ENCODE measurements at regions of chr11 and their contacts with region 1.

Region 1: GRCh38 chr11:86041975-86042378 is 26.9 kb downstream of the PICALM start:
- DNase-seq: peak; percentile 88
- H3K4me3 ChIP-seq: no peak overlapping the region
- H3K27ac ChIP-seq: no peak overlapping the region
- H3K27me3 ChIP-seq: no peaks in the 10 kb centered on the region
- CTCF ChIP-seq: peak; percentile 79

Region 2: GRCh38 chr11:85831017-85831443 is 210.9 kb before region 1 on chr11:
- CTCF ChIA-PET with region 1: no interaction called
- POLR2A ChIA-PET with region 1: no interaction called
- DNase-seq: no peak
- H3K4me3 ChIP-seq: no peak overlapping the region
- H3K27ac ChIP-seq: no peak overlapping the region
- H3K27me3 ChIP-seq: no peaks in the 10 kb centered on the region
- CTCF ChIP-seq: no peak

Region 3: GRCh38 chr11:86021377-86021776 is 20.6 kb before region 1 on chr11:
- CTCF ChIA-PET with region 1: interaction called, 32 read pairs
- POLR2A ChIA-PET with region 1: no interaction called
- DNase-seq: no peak
- H3K4me3 ChIP-seq: no peak overlapping the region
- H3K27ac ChIP-seq: no peak overlapping the region
- H3K27me3 ChIP-seq: no peaks in the 10 kb centered on the region
- CTCF ChIP-seq: no peak

Region 4: GRCh38 chr11:86068951-86069407 is 27.0 kb after region 1 on chr11 and contains the start of gene PICALM:
- CTCF ChIA-PET with region 1: interaction called, 22 read pairs
- POLR2A ChIA-PET with region 1: no interaction called
- DNase-seq: peak; percentile 98
- H3K4me3 ChIP-seq: peak within 1 kb of the TSS; percentile 98
- H3K27ac ChIP-seq: peak within 1 kb of the TSS; percentile 100
- H3K27me3 ChIP-seq: no peaks in the 10 kb centered on the region
- CTCF ChIP-seq: no peak
- polyA plus RNA-seq, gene PICALM: 294 and 303 TPM in 2 replicates

Region 5: DNA sequence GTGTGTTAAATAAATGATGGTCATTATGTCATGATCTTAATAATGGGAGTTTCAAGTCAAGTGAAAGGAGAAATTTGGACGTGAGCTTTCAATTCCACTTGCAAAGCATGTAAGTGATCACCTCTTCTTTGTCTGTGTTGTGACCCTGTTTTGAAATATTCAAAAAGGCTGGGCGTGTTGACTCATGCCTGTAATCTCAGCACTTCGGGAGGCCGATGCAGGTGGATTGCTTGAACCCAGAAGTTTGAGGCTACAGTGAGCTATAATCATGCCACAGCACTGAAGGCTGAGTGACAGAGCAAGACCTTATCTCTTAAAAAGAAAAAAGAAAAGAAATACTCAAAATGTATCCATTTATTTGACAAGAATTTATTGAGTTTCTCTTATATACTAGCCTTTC is 169.6 kb after region 1 on chr11:
- CTCF ChIA-PET with region 1: interaction called, 52 read pairs
- POLR2A ChIA-PET with region 1: no interaction called
- DNase-seq: no peak
- H3K4me3 ChIP-seq: no peak overlapping the region
- H3K27ac ChIP-seq: no peak overlapping the region
- H3K27me3 ChIP-seq: no peaks in the 10 kb centered on the region
- CTCF ChIP-seq: no peak

Region 6: GRCh38 chr11:86291466-86292262 is 249.7 kb after region 1 on chr11:
- CTCF ChIA-PET with region 1: interaction called, 11 read pairs
- POLR2A ChIA-PET with region 1: no interaction called
- DNase-seq: no peak
- H3K4me3 ChIP-seq: no peak overlapping the region
- H3K27ac ChIP-seq: no peak overlapping the region
- H3K27me3 ChIP-seq: no peaks in the 10 kb centered on the region
- CTCF ChIP-seq: peak; percentile 71